ENCODE measurements at regions of chr16 and their contacts with region 1.

Region 1: DNA sequence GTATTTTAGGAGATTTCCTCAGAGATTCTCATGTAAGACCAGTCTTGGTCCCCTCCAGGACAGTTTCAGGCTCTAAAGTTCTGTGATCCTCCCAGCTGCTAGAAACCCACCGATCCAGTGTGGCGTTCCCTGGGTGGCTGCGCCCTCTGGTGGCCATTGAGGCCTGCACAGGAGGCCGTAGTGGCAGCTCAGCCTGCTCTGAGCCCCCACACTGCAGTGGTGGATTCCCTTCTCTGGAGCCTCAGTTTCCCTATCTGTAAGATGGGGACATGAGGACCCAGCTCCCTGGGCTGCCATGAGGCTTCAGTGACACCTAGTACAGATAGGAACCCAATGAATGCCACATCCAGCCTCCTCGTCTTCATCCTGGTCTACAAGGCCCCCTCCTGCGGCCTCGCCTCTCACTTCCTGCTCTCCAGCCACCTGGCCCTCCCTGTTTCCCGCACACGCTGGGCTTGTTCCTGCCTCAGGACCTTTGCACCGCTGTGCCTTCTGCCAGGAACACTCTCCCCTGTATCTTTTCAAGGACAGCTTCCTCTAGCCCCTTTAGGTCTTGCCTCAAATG is 16.5 kb downstream of the CCDC102A start:
- DNase-seq: peak; percentile 49 to 95 (median 74)
- ATAC-seq: peak; percentile 91
- H3K4me3 ChIP-seq: no peak overlapping the region
- H3K27ac ChIP-seq: no peak overlapping the region
- H3K4me1 ChIP-seq: peaks cover 0 to 10% of the 10 kb centered on the region in 2 donors
- H3K27me3 ChIP-seq: no peaks in the 10 kb centered on the region
- CTCF ChIP-seq: peak; percentile 92 to 98

Region 2: GRCh38 chr16:57300387-57301125 is 219.3 kb before region 1 on chr16:
- intact Hi-C with region 1: loop called in 1 of 2 experiments (anchors 5 kb)
- DNase-seq: peak; percentile 97 to 100 (median 100)
- ATAC-seq: peak; percentile 95
- H3K4me3 ChIP-seq: peak overlapping the region; percentile 21 to 43
- H3K27ac ChIP-seq: peak overlapping the region; percentile 81 to 90
- H3K4me1 ChIP-seq: peaks cover 12 to 31% of the 10 kb centered on the region in 2 donors
- H3K27me3 ChIP-seq: peaks cover 0 to 3% of the 10 kb centered on the region in 2 donors
- CTCF ChIP-seq: peak; percentile 93 to 95

Region 3: GRCh38 chr16:57316390-57317017 is 203.4 kb before region 1 on chr16:
- intact Hi-C with region 1: loop called in 1 of 2 experiments (anchors 10 kb)
- DNase-seq: peak in 1 of 4 donors; percentile 24
- ATAC-seq: peak; percentile 77
- H3K4me3 ChIP-seq: no peak overlapping the region
- H3K27ac ChIP-seq: peak overlapping the region; percentile 33 to 64
- H3K4me1 ChIP-seq: peaks cover 3 to 11% of the 10 kb centered on the region in 2 donors
- H3K27me3 ChIP-seq: no peaks in the 10 kb centered on the region
- CTCF ChIP-seq: no peak

Region 4: GRCh38 chr16:57409065-57409464 is 110.8 kb before region 1 on chr16:
- intact Hi-C with region 1: no loop called
- DNase-seq: no peak
- ATAC-seq: peak; percentile 12
- H3K4me3 ChIP-seq: no peak overlapping the region
- H3K27ac ChIP-seq: peak overlapping the region in 1 of 2 donors; percentile 4
- H3K4me1 ChIP-seq: peaks cover 0 to 10% of the 10 kb centered on the region in 2 donors
- H3K27me3 ChIP-seq: no peaks in the 10 kb centered on the region
- CTCF ChIP-seq: no peak

Region 5: DNA sequence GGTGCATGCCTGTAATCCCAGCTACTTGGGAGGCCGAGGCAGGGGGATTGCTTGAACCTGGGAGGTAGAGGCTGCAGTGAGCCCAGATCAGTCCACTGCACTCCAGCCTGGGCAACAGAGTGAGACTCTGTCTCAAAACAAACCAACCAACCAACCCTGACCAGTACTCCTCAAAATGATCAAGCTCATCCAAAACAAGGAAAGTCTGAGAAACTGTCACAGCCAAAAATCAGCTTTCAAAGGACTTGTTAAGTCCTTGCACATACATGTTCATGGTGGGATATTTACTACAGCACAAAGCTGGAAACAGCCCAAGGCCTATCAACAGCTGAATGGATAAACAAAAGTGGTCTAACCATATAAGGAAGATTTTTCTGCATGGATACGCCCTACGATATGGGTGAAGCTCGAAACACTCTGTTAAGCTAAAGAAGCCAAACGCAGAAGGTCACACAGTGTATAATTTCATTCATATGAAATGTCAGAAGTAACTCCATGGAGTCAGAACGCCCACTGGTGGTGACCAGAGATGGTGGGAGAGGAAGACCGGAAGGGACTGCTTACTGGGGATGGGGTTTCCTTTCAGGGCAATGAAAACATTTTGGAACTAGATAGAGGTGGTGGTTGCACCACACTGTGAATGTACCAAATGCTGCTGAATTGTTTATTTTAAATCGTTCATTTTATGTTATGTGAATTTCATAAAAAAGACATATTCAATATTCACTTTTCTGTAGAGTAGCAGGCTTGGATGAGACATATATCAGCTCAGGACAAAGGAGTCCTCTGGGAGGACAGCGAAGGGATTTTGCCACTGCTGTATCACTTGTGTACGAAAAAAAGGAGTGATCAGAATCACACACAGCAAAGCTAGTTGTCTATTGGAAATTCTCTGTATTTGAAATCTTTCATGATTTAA is 97.6 kb before region 1 on chr16:
- intact Hi-C with region 1: loop called in 1 of 2 experiments (anchors 5 kb)
- DNase-seq: peak in 2 of 4 donors; percentile 63 to 82
- ATAC-seq: peak; percentile 46
- H3K4me3 ChIP-seq: no peak overlapping the region
- H3K27ac ChIP-seq: no peak overlapping the region
- H3K4me1 ChIP-seq: peaks cover 10 to 33% of the 10 kb centered on the region in 2 donors
- H3K27me3 ChIP-seq: no peaks in the 10 kb centered on the region
- CTCF ChIP-seq: peak; percentile 50 to 55

Region 6: GRCh38 chr16:57432989-57433388 is 86.9 kb before region 1 on chr16:
- intact Hi-C with region 1: no loop called
- DNase-seq: no peak
- ATAC-seq: no peak
- H3K4me3 ChIP-seq: no peak overlapping the region
- H3K27ac ChIP-seq: no peak overlapping the region
- H3K4me1 ChIP-seq: no peaks in the 10 kb centered on the region
- H3K27me3 ChIP-seq: no peaks in the 10 kb centered on the region
- CTCF ChIP-seq: no peak

Region 7: DNA sequence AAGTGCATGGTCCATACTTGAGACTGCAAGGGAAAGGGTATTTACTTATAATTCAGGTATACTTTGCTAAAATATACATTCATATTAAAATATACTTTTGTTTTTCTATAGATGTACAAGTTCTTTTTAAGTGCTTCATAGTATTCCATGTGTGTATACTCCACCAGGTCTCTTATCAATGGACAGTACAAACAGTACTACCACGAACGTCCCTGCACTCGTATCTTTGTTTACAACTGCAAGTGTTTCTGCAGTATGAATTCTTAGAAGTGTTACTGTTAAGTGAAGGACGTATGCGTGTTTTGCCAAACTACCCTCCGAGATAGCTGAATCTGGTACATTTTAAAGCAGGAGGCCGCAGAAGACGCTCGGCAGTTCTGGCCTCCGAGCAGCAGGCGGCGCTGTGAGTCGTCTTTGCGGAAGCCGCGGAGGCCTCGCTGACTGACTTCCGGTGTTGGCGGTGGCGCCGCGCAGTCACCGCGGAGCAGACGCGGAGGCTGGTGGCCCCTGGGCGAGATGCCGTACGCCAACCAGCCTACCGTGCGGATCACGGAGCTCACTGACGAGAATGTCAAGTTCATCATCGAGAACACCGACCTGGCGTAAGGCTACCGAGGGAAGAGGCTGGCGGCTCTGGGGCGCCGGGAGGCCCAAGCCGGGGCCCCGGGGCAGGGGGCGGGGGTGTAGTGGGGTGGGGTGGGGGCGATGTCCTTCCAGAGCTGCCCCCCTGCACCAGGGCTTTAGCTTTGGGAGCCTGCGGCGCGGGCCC is 57.5 kb before region 1 on chr16 and contains the start of gene POLR2C:
- intact Hi-C with region 1: loop called in 1 of 2 experiments (anchors 5 kb)
- DNase-seq: peak; percentile 77 to 98 (median 90)
- ATAC-seq: peak; percentile 94
- H3K4me3 ChIP-seq: peak within 1 kb of the TSS; percentile 94 to 96
- H3K27ac ChIP-seq: peak within 1 kb of the TSS; percentile 71 to 86
- H3K4me1 ChIP-seq: peaks cover 11 to 30% of the 10 kb centered on the region in 2 donors
- H3K27me3 ChIP-seq: no peaks in the 10 kb centered on the region
- CTCF ChIP-seq: peak; percentile 93 to 99
- polyA plus RNA-seq, gene POLR2C: 71.0 to 85.9 (median 81.9) TPM